Activated B cell treated with CpG ODN at 0.5 μM for 24 hours (primary cell): ENCODE measurements at regions of chr1 and their contacts with region 1.

Region 1: GRCh38 chr1:212455803-212456528 is 23.2 kb downstream of the NENF start:
- DNase-seq: peak; percentile 76
- ATAC-seq: peak; percentile 83
- H3K4me3 Mint-ChIP-seq: no peak overlapping the region
- H3K27ac Mint-ChIP-seq: no peak overlapping the region
- H3K4me1 Mint-ChIP-seq: peaks cover 4% of the 10 kb centered on the region
- H3K27me3 Mint-ChIP-seq: no peaks in the 10 kb centered on the region
- CTCF ChIP-seq: peak; percentile 98

Region 2: DNA sequence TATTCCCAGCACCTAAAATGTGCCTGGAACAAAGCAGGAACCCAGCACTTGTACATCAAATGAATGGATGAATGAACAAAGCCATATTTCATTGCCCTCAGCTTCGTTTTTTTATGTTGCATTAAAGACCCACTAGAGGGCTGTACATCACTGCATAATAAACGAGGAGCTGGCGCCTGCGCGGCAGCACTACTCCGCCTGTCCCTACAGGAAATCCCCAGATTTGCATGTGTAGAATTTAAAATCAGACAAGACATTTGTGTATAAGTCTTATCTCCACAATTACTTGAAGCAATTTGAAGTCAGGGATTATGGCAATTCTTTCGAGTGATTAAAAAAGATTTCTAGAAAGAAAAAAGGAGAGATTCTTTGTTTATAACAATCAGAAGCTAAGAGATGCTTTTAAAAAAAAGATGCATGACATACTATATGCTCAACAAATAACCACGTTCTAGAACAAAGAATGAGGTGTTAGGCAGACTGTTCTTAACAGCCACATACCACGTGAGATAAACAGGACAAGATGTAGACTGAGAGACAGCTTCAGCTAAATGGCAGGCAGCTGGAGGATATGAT is 775.1 kb before region 1 on chr1:
- CTCF ChIA-PET with region 1: interaction called, 55 read pairs
- POLR2A ChIA-PET with region 1: no interaction called
- intact Hi-C with region 1: loop called (anchors 1 kb)
- DNase-seq: peak; percentile 48
- ATAC-seq: peak; percentile 90
- H3K4me3 Mint-ChIP-seq: peak overlapping the region; percentile 26
- H3K27ac Mint-ChIP-seq: peak overlapping the region; percentile 85
- H3K4me1 Mint-ChIP-seq: peaks cover 41% of the 10 kb centered on the region
- H3K27me3 Mint-ChIP-seq: no peaks in the 10 kb centered on the region
- CTCF ChIP-seq: no peak

Region 3: DNA sequence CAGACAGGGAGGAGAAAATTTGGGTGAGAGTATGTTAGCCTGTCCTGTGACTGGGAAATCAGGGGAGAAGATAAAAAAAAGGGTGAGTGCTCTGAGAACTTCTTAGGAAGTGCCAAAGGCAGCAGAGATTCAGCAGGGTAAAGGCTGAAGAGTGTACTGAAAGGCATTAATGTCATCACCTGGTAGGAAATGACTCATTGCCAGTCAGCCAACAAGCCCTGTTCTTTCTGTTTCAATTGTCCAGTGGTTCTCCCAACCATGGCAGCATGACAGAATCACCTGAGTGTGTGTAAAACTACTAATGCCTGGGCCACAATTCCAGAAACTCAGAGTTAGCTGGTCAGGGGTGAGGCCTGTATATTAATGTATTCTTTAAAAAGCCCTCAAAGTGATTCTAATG is 504.1 kb before region 1 on chr1:
- CTCF ChIA-PET with region 1: no interaction called
- POLR2A ChIA-PET with region 1: no interaction called
- intact Hi-C with region 1: no loop called
- DNase-seq: no peak
- ATAC-seq: no peak
- H3K4me3 Mint-ChIP-seq: no peak overlapping the region
- H3K27ac Mint-ChIP-seq: no peak overlapping the region
- H3K4me1 Mint-ChIP-seq: no peaks in the 10 kb centered on the region
- H3K27me3 Mint-ChIP-seq: no peaks in the 10 kb centered on the region
- CTCF ChIP-seq: no peak

Region 4: DNA sequence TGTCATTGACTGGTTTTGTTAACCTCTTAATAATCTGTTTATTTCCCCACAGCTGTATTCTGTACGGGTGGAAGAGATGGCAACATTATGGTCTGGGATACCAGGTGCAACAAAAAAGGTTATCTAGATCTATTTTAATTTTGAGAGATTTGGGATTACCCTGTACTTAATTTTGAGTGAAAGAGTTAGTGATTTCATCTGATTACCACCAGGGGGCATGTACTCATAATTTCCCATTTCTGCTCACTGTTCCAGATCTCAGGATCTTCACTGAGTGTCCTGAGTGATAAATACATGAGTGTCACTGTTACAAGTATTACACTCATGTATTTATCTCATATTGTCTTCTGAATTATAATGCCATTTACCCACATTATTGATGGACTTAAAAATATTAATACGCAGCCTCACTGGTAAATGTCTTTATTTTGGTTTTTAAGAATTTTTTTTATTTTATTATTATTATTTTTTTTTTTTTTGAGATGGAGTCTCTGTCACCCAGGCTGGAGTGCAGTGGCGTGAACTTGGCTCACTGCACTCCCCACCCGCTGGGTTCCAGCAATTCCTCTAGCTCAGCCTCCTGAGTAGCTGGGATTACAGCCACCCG is 393.0 kb before region 1 on chr1:
- CTCF ChIA-PET with region 1: interaction called, 99 read pairs
- POLR2A ChIA-PET with region 1: interaction called, 3 read pairs
- intact Hi-C with region 1: loop called (anchors 1 kb)
- DNase-seq: no peak
- ATAC-seq: peak; percentile 37
- H3K4me3 Mint-ChIP-seq: no peak overlapping the region
- H3K27ac Mint-ChIP-seq: no peak overlapping the region
- H3K4me1 Mint-ChIP-seq: no peaks in the 10 kb centered on the region
- H3K27me3 Mint-ChIP-seq: no peaks in the 10 kb centered on the region
- CTCF ChIP-seq: peak; percentile 36

Region 5: GRCh38 chr1:212291505-212292134 is 164.3 kb before region 1 on chr1:
- CTCF ChIA-PET with region 1: interaction called, 22 read pairs
- POLR2A ChIA-PET with region 1: no interaction called
- intact Hi-C with region 1: loop called (anchors 1 kb)
- DNase-seq: no peak
- ATAC-seq: peak; percentile 91
- H3K4me3 Mint-ChIP-seq: peak overlapping the region; percentile 2
- H3K27ac Mint-ChIP-seq: no peak overlapping the region
- H3K4me1 Mint-ChIP-seq: peaks cover 78% of the 10 kb centered on the region
- H3K27me3 Mint-ChIP-seq: no peaks in the 10 kb centered on the region
- CTCF ChIP-seq: peak; percentile 44

Region 6: DNA sequence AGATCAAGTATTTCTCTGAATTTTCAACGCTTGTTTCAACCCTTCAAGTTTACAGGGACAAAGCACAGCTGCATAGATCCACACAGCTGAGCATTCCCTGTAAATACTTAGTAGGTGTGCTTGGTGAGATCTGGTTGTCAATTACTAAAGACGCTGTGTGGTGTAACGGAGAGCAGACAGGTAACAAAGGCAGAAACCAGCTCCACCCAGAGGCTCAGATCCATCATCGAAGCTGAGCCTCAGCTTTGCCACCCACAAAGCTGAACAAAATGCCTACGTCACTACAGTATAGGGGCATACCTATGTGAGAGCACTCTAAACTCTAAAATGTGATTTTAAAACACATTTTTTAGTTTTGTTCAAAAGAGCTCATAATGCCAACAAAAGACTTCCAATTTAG is 80.0 kb before region 1 on chr1:
- CTCF ChIA-PET with region 1: interaction called, 12 read pairs
- POLR2A ChIA-PET with region 1: no interaction called
- intact Hi-C with region 1: no loop called
- DNase-seq: no peak
- ATAC-seq: no peak
- H3K4me3 Mint-ChIP-seq: no peak overlapping the region
- H3K27ac Mint-ChIP-seq: peak overlapping the region; percentile 13
- H3K4me1 Mint-ChIP-seq: no peaks in the 10 kb centered on the region
- H3K27me3 Mint-ChIP-seq: no peaks in the 10 kb centered on the region
- CTCF ChIP-seq: no peak

Region 7: DNA sequence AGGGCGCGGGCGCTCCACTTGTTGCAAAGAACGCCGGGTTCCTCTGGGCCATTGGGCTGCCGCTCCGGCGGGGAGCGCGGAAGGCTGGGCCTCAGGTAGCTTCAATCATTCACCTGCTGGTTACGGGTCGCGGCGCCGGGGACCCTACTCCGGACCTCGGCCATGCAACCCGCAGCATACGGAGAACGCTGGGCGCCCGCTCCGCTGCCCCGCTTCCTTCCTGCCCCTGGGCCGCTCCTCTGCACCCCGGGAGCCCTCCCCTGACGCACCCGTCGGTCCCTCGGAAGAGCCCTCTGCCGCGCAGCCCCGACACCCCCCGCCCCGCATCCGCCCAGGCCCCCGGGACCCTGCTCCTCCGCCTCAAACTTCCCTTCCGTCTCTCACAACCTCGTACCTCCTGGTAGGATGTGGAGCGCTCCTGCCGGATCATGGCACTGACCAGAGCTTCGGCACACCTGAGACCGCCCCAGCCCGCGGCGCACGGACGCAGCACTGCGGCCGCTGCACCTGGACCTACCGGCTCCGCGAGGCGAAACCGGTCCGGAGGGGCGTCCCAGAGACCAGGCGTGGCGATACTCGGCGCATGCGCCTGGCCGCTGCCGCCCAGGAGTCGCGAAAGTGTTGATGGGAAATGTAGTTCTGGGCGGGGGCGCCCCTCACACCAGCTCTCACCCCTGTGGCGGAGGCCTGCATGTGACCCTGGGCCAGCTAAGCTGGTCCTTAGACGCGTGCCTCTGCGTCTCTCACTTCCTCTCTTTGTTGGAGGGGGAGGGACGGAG is 41.4 kb before region 1 on chr1 and contains the start of gene PACC1:
- CTCF ChIA-PET with region 1: interaction called, 12 read pairs
- POLR2A ChIA-PET with region 1: interaction called, 6 read pairs
- intact Hi-C with region 1: loop called (anchors 1 kb)
- DNase-seq: peak; percentile 93
- ATAC-seq: peak; percentile 98
- H3K4me3 Mint-ChIP-seq: peak within 1 kb of the TSS; percentile 100
- H3K27ac Mint-ChIP-seq: peak within 1 kb of the TSS; percentile 96
- H3K4me1 Mint-ChIP-seq: peaks cover 43% of the 10 kb centered on the region
- H3K27me3 Mint-ChIP-seq: no peaks in the 10 kb centered on the region
- CTCF ChIP-seq: no peak
- total RNA-seq, gene PACC1: 15.2 and 20.0 TPM in 2 replicates

Region 8: DNA sequence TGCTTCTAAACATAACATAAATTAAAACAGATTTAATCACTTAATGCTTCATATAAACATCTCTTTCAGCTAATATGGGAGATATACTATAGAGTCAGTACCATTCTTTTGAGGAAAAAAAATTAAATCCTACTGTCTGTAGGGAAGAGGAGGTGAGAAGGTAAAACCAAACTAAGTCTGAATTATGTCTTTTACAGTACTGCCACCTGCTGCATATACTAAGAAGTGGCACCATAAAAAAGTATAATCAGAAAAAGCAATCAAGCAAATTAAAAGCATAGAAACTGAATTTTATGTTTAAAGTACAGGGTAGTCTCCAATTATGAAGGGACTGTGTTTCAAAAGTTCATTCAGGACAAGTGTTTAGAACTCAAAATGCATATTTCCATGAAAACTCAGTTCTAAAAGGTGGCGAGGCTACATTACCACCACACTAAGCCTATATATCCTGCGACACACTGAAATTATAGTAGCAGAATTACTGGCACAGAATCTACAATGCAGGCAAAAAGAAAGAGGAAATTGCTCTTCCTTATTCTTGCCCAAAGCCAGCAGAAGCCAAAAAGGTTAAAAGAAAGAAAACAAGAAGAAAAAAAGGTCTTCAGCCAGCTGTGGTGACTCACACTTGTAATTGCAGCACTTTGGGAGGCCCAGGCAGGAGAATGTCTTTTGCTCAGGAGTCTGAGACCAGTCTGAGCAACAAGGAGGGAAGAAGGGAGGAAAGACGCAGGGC is 326.6 kb after region 1 on chr1:
- CTCF ChIA-PET with region 1: interaction called, 27 read pairs
- POLR2A ChIA-PET with region 1: no interaction called
- intact Hi-C with region 1: loop called (anchors 1 kb)
- DNase-seq: no peak
- ATAC-seq: peak; percentile 66
- H3K4me3 Mint-ChIP-seq: no peak overlapping the region
- H3K27ac Mint-ChIP-seq: no peak overlapping the region
- H3K4me1 Mint-ChIP-seq: peaks cover 2% of the 10 kb centered on the region
- H3K27me3 Mint-ChIP-seq: no peaks in the 10 kb centered on the region
- CTCF ChIP-seq: peak; percentile 80